Activated T-helper 1 cell treated with anti-CD3 and anti-CD28 coated beads, Interleukin-12 subunit alpha, Interleukin-12 subunit beta, Interleukin-2, Interleukin-4 antibody, amounts not matched to agents 30 ng/mL and 10 ng/mL and 1 ng/mL, durations not matched to agents 14 hours and 24 hours and 36 hours (primary cell): ENCODE measurements at regions of chr11 and their contacts with region 1.

Region 1: GRCh38 chr11:61187505-61188130 is 15.7 kb upstream of the PGA3 start:
- DNase-seq: peak; percentile 64
- H3K4me3 Mint-ChIP-seq: no peak overlapping the region
- H3K27ac Mint-ChIP-seq: no peak overlapping the region
- H3K4me1 Mint-ChIP-seq: no peaks in the 10 kb centered on the region
- H3K27me3 Mint-ChIP-seq: peaks cover 14% of the 10 kb centered on the region

Region 2: GRCh38 chr11:60797846-60798630 is 389.6 kb before region 1 on chr11:
- intact Hi-C with region 1: no loop called
- DNase-seq: no peak
- H3K4me3 Mint-ChIP-seq: no peak overlapping the region
- H3K27ac Mint-ChIP-seq: no peak overlapping the region
- H3K4me1 Mint-ChIP-seq: no peaks in the 10 kb centered on the region
- H3K27me3 Mint-ChIP-seq: peaks cover 9% of the 10 kb centered on the region

Region 3: GRCh38 chr11:60831143-60831500 is 356.5 kb before region 1 on chr11:
- intact Hi-C with region 1: loop called (anchors 1 kb)
- DNase-seq: peak; percentile 62
- H3K4me3 Mint-ChIP-seq: no peak overlapping the region
- H3K27ac Mint-ChIP-seq: no peak overlapping the region
- H3K4me1 Mint-ChIP-seq: peaks cover 12% of the 10 kb centered on the region
- H3K27me3 Mint-ChIP-seq: no peaks in the 10 kb centered on the region

Region 4: GRCh38 chr11:60992842-60993409 is 194.7 kb before region 1 on chr11:
- intact Hi-C with region 1: loop called (anchors 2 kb)
- DNase-seq: no peak
- H3K4me3 Mint-ChIP-seq: peak overlapping the region; percentile 68
- H3K27ac Mint-ChIP-seq: peak overlapping the region; percentile 95
- H3K4me1 Mint-ChIP-seq: peaks cover 72% of the 10 kb centered on the region
- H3K27me3 Mint-ChIP-seq: no peaks in the 10 kb centered on the region

Region 5: DNA sequence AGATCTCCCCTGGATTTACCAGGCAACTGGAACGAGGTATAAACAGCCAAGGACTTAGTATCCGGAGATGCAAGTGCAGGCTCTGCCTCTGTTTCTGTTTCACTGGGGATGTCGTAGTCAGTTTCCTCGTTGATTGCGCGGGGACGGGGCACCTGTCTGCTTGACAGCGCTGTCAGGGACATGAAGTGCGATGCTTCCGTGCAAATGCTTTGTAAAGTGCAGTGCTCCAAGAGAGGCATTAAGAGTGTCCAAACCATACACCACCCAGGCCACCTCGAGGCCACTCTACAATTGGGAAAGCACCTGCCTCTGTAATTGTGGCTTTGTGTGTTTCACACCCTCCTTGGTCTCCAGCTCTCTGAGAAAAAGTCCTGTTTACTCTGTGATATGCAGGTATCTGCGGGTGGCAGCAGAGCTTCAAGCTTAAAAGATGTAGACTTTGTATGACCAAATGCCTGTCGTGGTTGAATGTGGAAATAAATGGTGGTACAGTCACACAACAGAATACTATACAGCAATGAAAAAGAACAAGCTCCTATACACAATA is 103.9 kb before region 1 on chr11:
- intact Hi-C with region 1: loop called (anchors 5 kb)
- DNase-seq: peak; percentile 75
- H3K4me3 Mint-ChIP-seq: peak overlapping the region; percentile 88
- H3K27ac Mint-ChIP-seq: peak overlapping the region; percentile 99
- H3K4me1 Mint-ChIP-seq: peaks cover 67% of the 10 kb centered on the region
- H3K27me3 Mint-ChIP-seq: no peaks in the 10 kb centered on the region

Region 6: GRCh38 chr11:61384271-61385242 is 196.9 kb after region 1 on chr11:
- intact Hi-C with region 1: no loop called
- DNase-seq: no peak
- H3K4me3 Mint-ChIP-seq: no peak overlapping the region
- H3K27ac Mint-ChIP-seq: no peak overlapping the region
- H3K4me1 Mint-ChIP-seq: peaks cover 7% of the 10 kb centered on the region
- H3K27me3 Mint-ChIP-seq: no peaks in the 10 kb centered on the region